Left cardiac atrium (tissue), 4 donors: ENCODE measurements at regions of chr7 and their contacts with region 1.

Region 1: DNA sequence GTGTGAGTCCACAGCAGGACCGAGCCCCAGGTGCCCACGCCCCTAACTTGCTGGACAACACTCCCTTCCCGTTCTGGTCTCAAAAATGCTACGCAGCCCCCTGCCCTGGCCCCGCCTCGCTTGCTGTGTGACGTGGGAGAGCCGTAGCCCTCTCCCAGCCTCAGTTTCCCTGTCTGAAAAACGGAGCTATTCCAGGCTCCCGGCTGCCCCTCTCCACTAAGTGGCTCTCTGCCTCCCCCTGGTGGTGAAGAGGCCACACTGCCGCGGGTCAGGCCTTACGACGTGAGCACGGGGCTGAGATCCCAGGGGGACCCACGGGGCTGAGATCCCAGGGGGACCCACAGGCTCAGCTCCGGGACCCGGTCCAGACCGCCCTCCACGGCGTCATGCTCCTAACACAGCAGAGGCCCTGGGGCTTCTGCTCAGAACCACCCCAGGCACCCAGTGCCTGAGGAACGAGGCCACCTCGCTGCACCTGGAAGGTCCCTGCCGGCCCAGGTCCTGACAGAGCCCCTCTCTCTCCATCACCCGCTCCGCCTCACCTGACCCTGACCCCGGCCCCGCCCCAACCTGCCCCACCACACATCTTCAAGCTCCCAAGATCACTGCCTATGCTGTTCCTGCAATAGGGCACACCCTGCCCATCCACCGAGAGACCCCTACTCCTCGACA is 26.7 kb downstream of the MICALL2 start:
- DNase-seq: peak; percentile 72
- ATAC-seq: peak; percentile 54 to 64

Region 2: GRCh38 chr7:1193593-1194424 is 238.7 kb before region 1 on chr7:
- intact Hi-C with region 1: loop called in 1 of 2 experiments (anchors 2 kb)
- DNase-seq: no peak
- ATAC-seq: peak; percentile 84 to 90